Heart left ventricle (tissue), 16 donors: ENCODE measurements at regions of chr9 and their contacts with region 1.

Region 1: GRCh38 chr9:94799578-94800264 is 73.2 kb downstream of the AOPEP start:
- DNase-seq: no peak
- ATAC-seq: peak in 2 of 4 donors; percentile 35 to 66
- H3K4me3 ChIP-seq: no peak overlapping the region
- H3K27ac ChIP-seq: peak overlapping the region in 8 of 12 donors; percentile 7 to 70 (median 34)
- H3K4me1 ChIP-seq: peaks cover 0 to 32% (median 18%) of the 10 kb centered on the region in 12 donors
- H3K27me3 ChIP-seq: no peaks in the 10 kb centered on the region
- CTCF ChIP-seq: no peak
- POLR2A ChIP-seq: no peak

Region 2: DNA sequence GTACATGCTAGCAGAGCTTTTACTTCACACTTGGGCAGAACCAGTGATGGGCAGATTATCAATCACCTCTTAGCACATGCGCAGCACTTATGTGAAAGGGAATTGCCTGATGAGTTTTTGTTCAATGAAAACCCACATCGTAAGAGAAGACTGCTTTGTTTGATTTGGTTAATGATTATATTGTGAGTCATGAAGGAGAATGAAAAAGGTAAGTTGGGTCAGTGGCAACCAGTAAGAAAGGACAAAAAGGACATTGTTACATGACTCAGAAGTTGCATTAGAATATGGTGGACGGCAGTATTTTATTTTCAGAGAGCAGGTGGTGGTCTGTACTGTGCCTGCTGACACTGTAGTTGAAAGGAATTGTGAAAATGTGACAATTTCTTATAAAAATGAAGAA is 54.2 kb after region 1 on chr9:
- intact Hi-C with region 1: loop called in 1 of 10 experiments (anchors 10 kb)
- DNase-seq: no peak
- ATAC-seq: no peak
- H3K4me3 ChIP-seq: no peak overlapping the region
- H3K27ac ChIP-seq: no peak overlapping the region
- H3K4me1 ChIP-seq: peaks cover 0 to 2% (median 0%) of the 10 kb centered on the region in 12 donors
- H3K27me3 ChIP-seq: no peaks in the 10 kb centered on the region
- CTCF ChIP-seq: no peak
- POLR2A ChIP-seq: no peak

Region 3: GRCh38 chr9:94912700-94913249 is 113.1 kb after region 1 on chr9:
- intact Hi-C with region 1: loop called in 1 of 10 experiments (anchors 5 kb)
- DNase-seq: peak in 1 of 5 donors; percentile 7
- ATAC-seq: no peak
- H3K4me3 ChIP-seq: no peak overlapping the region
- H3K27ac ChIP-seq: peak overlapping the region in 4 of 12 donors; percentile 3 to 21 (median 10)
- H3K4me1 ChIP-seq: peaks cover 0 to 31% (median 13%) of the 10 kb centered on the region in 12 donors
- H3K27me3 ChIP-seq: no peaks in the 10 kb centered on the region
- CTCF ChIP-seq: no peak
- POLR2A ChIP-seq: no peak